PC-9 (cell line): ENCODE measurements at regions of chr2 and their contacts with region 1.

Region 1: DNA sequence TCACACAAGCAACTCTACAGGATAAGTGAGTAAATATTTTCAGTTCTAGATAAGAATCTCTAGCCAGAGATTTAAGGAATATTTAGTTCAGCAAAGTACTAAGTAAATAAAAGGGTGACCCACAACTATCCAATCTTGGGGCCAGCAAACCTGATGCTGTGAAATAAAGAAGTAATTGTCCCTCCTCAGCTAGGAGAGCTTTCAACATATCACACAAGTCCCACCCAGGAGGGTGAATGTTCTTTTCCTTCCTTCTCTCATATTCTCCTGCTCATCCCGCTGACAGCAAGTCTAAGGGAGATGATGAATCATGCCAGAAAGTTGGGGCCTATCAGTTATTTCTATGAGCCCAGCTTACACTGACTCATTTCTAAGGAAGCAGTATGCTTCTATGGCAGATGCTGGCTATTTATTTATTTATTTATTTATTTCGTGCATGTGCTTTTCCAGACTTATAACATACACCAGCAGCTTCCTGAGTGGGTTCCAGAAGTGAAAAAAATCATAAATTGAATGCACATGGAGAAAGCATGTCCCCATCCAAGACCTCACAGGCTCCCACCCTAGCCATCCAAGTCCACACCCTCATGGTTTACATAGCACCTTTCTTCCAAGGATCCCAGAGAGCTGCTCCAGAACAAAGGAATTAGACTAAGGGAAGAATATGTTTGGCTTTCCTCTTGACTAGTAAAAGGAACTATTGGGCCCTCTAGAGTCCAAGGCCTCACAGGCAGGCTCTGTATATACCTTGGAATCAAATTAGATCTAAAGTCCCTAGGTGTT is 1074.1 kb upstream of the ZEB2 start:
- DNase-seq: peak; percentile 51 to 83
- H3K4me3 ChIP-seq: no peak overlapping the region
- H3K27ac ChIP-seq: peak overlapping the region; percentile 28; the same call in 1 of the 2 replicates
- H3K4me1 ChIP-seq: peaks cover 17% of the 10 kb centered on the region
- H3K27me3 ChIP-seq: no peaks in the 10 kb centered on the region
- CTCF ChIP-seq: no peak

Region 2: DNA sequence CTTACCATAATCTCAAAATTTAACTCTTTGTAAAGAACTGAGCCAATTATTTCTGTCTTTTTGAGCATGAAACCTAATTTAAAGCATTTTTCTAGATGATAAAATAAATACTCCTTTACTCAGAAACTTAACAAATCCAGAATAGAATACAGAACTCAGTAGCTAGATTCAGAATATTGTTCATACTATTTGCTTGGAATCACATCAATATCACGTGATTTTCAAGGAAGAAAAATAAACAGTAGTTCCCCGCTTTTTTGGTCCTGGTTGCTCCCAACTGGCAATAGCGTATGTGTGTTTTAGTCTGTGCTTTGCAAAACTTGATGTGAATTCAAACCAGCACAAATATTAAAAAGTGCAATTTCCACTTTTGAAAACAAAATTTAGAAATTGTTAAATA is 411.1 kb before region 1 on chr2:
- CTCF ChIA-PET with region 1: no interaction called
- POLR2A ChIA-PET with region 1: no interaction called
- intact Hi-C with region 1: no loop called
- DNase-seq: no peak
- H3K4me3 ChIP-seq: no peak overlapping the region
- H3K27ac ChIP-seq: no peak overlapping the region
- H3K4me1 ChIP-seq: no peaks in the 10 kb centered on the region
- H3K27me3 ChIP-seq: no peaks in the 10 kb centered on the region
- CTCF ChIP-seq: no peak

Region 3: GRCh38 chr2:145687442-145688134 is 93.6 kb after region 1 on chr2:
- CTCF ChIA-PET with region 1: interaction called, 3 read pairs
- POLR2A ChIA-PET with region 1: no interaction called
- intact Hi-C with region 1: loop called (anchors 2 kb)
- DNase-seq: no peak
- H3K4me3 ChIP-seq: no peak overlapping the region
- H3K27ac ChIP-seq: 0 out of 2 replicates have a peak overlapping the region, but pooled peaks have one; percentile 6
- H3K4me1 ChIP-seq: peaks cover 36% of the 10 kb centered on the region
- H3K27me3 ChIP-seq: no peaks in the 10 kb centered on the region
- CTCF ChIP-seq: no peak

Region 4: GRCh38 chr2:145692971-145693478 is 99.0 kb after region 1 on chr2:
- CTCF ChIA-PET with region 1: interaction called, 3 read pairs
- POLR2A ChIA-PET with region 1: no interaction called
- intact Hi-C with region 1: loop called (anchors 1 kb)
- DNase-seq: peak; percentile 69 to 91
- H3K4me3 ChIP-seq: no peak overlapping the region
- H3K27ac ChIP-seq: peak overlapping the region; percentile 98
- H3K4me1 ChIP-seq: peaks cover 22% of the 10 kb centered on the region
- H3K27me3 ChIP-seq: no peaks in the 10 kb centered on the region
- CTCF ChIP-seq: no peak

Region 5: GRCh38 chr2:146721486-146721885 is 1127.5 kb after region 1 on chr2:
- CTCF ChIA-PET with region 1: no interaction called
- POLR2A ChIA-PET with region 1: no interaction called
- intact Hi-C with region 1: no loop called
- DNase-seq: peak in 1 of 2 experiments; percentile 41
- H3K4me3 ChIP-seq: no peak overlapping the region
- H3K27ac ChIP-seq: no peak overlapping the region
- H3K4me1 ChIP-seq: no peaks in the 10 kb centered on the region
- H3K27me3 ChIP-seq: no peaks in the 10 kb centered on the region
- CTCF ChIP-seq: no peak